B cell (primary cell): ENCODE measurements at regions of chr5 and their contacts with region 1.

Region 1: DNA sequence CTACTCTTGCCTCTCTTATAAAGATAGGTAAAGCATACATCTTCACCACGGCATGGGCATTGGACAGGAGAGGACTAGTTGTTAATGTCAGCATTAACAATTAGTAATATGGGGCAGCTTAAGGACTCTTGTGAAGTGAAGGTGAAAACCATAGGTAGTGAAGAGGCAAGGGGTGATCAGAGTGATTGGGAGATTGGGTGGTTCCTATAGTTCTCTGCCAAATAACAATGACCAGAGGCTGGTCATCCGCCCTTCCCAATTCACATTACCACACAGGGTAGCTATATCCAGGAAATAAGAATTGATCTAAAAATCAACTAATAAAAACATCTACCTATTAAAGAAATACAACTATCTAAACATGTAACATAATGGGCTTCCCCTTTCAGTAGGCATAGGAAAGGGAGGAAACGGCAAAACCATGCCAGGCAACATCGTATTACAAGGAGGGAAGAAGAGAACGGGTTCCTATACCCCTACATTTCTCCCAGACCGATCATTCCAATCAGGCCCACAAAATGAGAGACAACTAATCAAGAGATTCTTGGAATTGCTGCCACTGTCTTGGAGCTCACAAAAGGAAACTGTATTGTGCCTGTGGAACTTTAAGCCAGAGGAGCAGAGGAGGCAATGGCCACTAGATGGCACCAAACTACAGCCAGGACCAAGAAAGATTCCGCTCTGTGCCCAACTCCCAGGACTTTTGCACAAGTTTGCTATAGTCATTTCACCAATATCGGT is 121.6 kb downstream of the FBXL17 start:
- DNase-seq: peak; percentile 75
- ATAC-seq: peak; percentile 73
- H3K4me3 ChIP-seq: peak overlapping the region in 1 of 5 experiments; percentile 20
- H3K4me3 Mint-ChIP-seq: peak overlapping the region; percentile 54
- H3K27ac ChIP-seq: no peak overlapping the region
- H3K27ac Mint-ChIP-seq: no peak overlapping the region
- H3K4me1 ChIP-seq: peaks cover 3 to 4% of the 10 kb centered on the region in 2 donors
- H3K4me1 Mint-ChIP-seq: peaks cover 5% of the 10 kb centered on the region
- H3K27me3 ChIP-seq: no peaks in the 10 kb centered on the region
- H3K27me3 Mint-ChIP-seq: no peaks in the 10 kb centered on the region
- CTCF ChIP-seq: peak; percentile 98

Region 2: GRCh38 chr5:108238936-108239887 is 21.1 kb before region 1 on chr5:
- CTCF ChIA-PET with region 1: interaction called, 11 read pairs
- POLR2A ChIA-PET with region 1: no interaction called
- intact Hi-C with region 1: no loop called
- DNase-seq: no peak
- ATAC-seq: no peak
- H3K4me3 ChIP-seq: no peak overlapping the region
- H3K4me3 Mint-ChIP-seq: no peak overlapping the region
- H3K27ac ChIP-seq: no peak overlapping the region
- H3K27ac Mint-ChIP-seq: no peak overlapping the region
- H3K4me1 ChIP-seq: no peaks in the 10 kb centered on the region
- H3K4me1 Mint-ChIP-seq: peaks cover 8% of the 10 kb centered on the region
- H3K27me3 ChIP-seq: no peaks in the 10 kb centered on the region
- H3K27me3 Mint-ChIP-seq: no peaks in the 10 kb centered on the region
- CTCF ChIP-seq: no peak

Region 3: GRCh38 chr5:108271127-108271526 is 10.8 kb after region 1 on chr5:
- CTCF ChIA-PET with region 1: interaction called, 19 read pairs
- POLR2A ChIA-PET with region 1: no interaction called
- intact Hi-C with region 1: no loop called
- DNase-seq: no peak
- ATAC-seq: no peak
- H3K4me3 ChIP-seq: no peak overlapping the region
- H3K4me3 Mint-ChIP-seq: no peak overlapping the region
- H3K27ac ChIP-seq: no peak overlapping the region
- H3K27ac Mint-ChIP-seq: no peak overlapping the region
- H3K4me1 ChIP-seq: no peaks in the 10 kb centered on the region
- H3K4me1 Mint-ChIP-seq: no peaks in the 10 kb centered on the region
- H3K27me3 ChIP-seq: no peaks in the 10 kb centered on the region
- H3K27me3 Mint-ChIP-seq: no peaks in the 10 kb centered on the region
- CTCF ChIP-seq: no peak

Region 4: DNA sequence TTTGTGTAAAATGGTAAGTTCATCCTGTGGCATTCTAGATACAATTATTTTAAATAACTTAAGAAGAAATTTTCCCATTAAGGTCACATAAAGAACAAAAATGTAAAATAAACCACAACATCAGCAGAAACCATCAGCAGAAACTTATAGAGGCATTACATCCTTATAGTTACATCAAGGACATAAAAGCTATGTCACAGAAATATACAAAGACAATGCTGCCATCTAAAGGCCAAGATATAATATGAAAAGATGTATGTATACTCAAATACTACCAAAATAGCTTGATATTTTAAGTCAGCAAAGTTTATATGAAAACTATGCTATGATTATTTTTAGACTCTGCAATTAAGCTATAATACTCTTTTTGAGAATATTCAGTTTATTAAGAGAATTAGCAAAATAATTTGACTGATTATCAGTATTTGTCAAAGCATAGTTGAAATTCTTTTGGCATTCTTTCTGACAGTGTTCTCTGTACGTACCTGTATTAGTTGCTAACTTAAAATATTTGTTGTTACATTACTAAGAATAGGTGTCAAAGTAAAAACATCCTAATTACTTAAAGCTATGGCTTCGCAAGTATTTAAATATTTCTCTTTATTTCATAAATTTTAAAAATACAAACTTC is 85.4 kb after region 1 on chr5:
- CTCF ChIA-PET with region 1: interaction called, 68 read pairs
- POLR2A ChIA-PET with region 1: no interaction called
- intact Hi-C with region 1: loop called (anchors 1 kb)
- DNase-seq: peak; percentile 54
- ATAC-seq: no peak
- H3K4me3 ChIP-seq: no peak overlapping the region
- H3K4me3 Mint-ChIP-seq: no peak overlapping the region
- H3K27ac ChIP-seq: no peak overlapping the region
- H3K27ac Mint-ChIP-seq: no peak overlapping the region
- H3K4me1 ChIP-seq: no peaks in the 10 kb centered on the region
- H3K4me1 Mint-ChIP-seq: no peaks in the 10 kb centered on the region
- H3K27me3 ChIP-seq: no peaks in the 10 kb centered on the region
- H3K27me3 Mint-ChIP-seq: no peaks in the 10 kb centered on the region
- CTCF ChIP-seq: peak; percentile 74

Region 5: GRCh38 chr5:108353087-108353486 is 92.8 kb after region 1 on chr5:
- CTCF ChIA-PET with region 1: interaction called, 12 read pairs
- POLR2A ChIA-PET with region 1: no interaction called
- intact Hi-C with region 1: no loop called
- DNase-seq: no peak
- ATAC-seq: no peak
- H3K4me3 ChIP-seq: no peak overlapping the region
- H3K4me3 Mint-ChIP-seq: no peak overlapping the region
- H3K27ac ChIP-seq: no peak overlapping the region
- H3K27ac Mint-ChIP-seq: no peak overlapping the region
- H3K4me1 ChIP-seq: no peaks in the 10 kb centered on the region
- H3K4me1 Mint-ChIP-seq: no peaks in the 10 kb centered on the region
- H3K27me3 ChIP-seq: no peaks in the 10 kb centered on the region
- H3K27me3 Mint-ChIP-seq: no peaks in the 10 kb centered on the region
- CTCF ChIP-seq: no peak

Region 6: GRCh38 chr5:109309326-109310063 is 1049.2 kb after region 1 on chr5:
- CTCF ChIA-PET with region 1: no interaction called
- POLR2A ChIA-PET with region 1: no interaction called
- intact Hi-C with region 1: no loop called
- DNase-seq: no peak
- ATAC-seq: no peak
- H3K4me3 ChIP-seq: no peak overlapping the region
- H3K4me3 Mint-ChIP-seq: no peak overlapping the region
- H3K27ac ChIP-seq: no peak overlapping the region
- H3K27ac Mint-ChIP-seq: no peak overlapping the region
- H3K4me1 ChIP-seq: no peaks in the 10 kb centered on the region
- H3K4me1 Mint-ChIP-seq: no peaks in the 10 kb centered on the region
- H3K27me3 ChIP-seq: peaks cover 0 to under 1% (median 0%) of the 10 kb centered on the region in 4 experiments
- H3K27me3 Mint-ChIP-seq: peaks cover 3% of the 10 kb centered on the region
- CTCF ChIP-seq: no peak